ENCODE measurements at regions of chr1 and their contacts with region 1.

Region 1: DNA sequence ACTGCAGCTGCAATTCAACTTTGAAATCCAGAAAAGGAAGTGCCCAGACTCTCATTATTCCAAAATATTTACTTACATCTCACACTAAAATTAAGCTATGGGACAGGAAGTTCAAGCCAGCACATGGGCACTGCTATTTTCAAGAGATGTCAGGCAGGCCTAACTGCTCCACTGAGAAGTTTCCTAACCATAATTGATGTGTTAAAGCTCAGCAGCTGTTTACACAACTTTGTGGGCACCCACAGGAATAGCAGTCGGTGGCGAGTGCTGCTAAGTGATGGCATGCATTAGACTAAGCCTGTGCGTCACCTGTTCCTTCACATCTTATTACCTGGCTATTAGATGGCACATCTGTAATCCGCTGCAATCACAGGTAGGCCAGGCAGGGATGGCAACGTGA is 303.3 kb upstream of the DAB1 start:
- DNase-seq: no peak
- H3K27ac ChIP-seq: no peak overlapping the region
- CTCF ChIP-seq: no peak

Region 2: GRCh38 chr1:57420981-57421785 is 305.9 kb before region 1 on chr1:
- CTCF ChIA-PET with region 1: interaction called, 11 read pairs
- POLR2A ChIA-PET with region 1: no interaction called
- DNase-seq: no peak
- H3K27ac ChIP-seq: no peak overlapping the region
- CTCF ChIP-seq: no peak

Region 3: GRCh38 chr1:57741521-57741920 is 14.4 kb after region 1 on chr1:
- CTCF ChIA-PET with region 1: no interaction called
- POLR2A ChIA-PET with region 1: no interaction called
- DNase-seq: no peak
- H3K27ac ChIP-seq: no peak overlapping the region
- CTCF ChIP-seq: no peak